ENCODE measurements at regions of chr19 and their contacts with region 1.

Region 1: GRCh38 chr19:5524081-5524480 is 43.7 kb downstream of the TINCR start:
- DNase-seq: no peak

Region 2: GRCh38 chr19:5466814-5467291 is 57.2 kb before region 1 on chr19:
- intact Hi-C with region 1: no loop called
- DNase-seq: no peak

Region 3: GRCh38 chr19:5542665-5543064 is 18.6 kb after region 1 on chr19:
- intact Hi-C with region 1: loop called (anchors 2 kb)
- DNase-seq: no peak

Region 4: GRCh38 chr19:5667751-5668271 is 143.7 kb after region 1 on chr19:
- intact Hi-C with region 1: no loop called
- DNase-seq: no peak